H1 (cell line): ENCODE measurements at regions of chr2 and their contacts with region 1.

Region 1: GRCh38 chr2:231662028-231662810 is 46.1 kb upstream of the PTMA start:
- DNase-seq: peak; percentile 97 to 98
- H3K4me3 ChIP-seq: peak overlapping the region; percentile 14 to 54 (median 24); a peak in 6 of 8 replicates
- H3K27ac ChIP-seq: peak overlapping the region; percentile 95
- H3K4me1 ChIP-seq: peaks cover 0 to 26% (median 10%) of the 10 kb centered on the region in 4 experiments; a peak in 6 of 7 replicates
- H3K27me3 ChIP-seq: peaks cover 0 to 10% (median 3%) of the 10 kb centered on the region in 4 experiments; a peak in 5 of 7 replicates
- CTCF ChIP-seq: 0 out of 4 replicates have a peak, but pooled peaks of 1 of the 3 experiments have one; percentile 5
- EP300 ChIP-seq: peak; percentile 42 to 63; a peak in 1 of 3 replicates
- POLR2A ChIP-seq: peak in 1 of 2 experiments; percentile 79; a peak in 2 of 3 replicates
- RAD21 ChIP-seq: peak in 1 of 2 experiments; percentile 15; a peak in 1 of 4 replicates

Region 2: DNA sequence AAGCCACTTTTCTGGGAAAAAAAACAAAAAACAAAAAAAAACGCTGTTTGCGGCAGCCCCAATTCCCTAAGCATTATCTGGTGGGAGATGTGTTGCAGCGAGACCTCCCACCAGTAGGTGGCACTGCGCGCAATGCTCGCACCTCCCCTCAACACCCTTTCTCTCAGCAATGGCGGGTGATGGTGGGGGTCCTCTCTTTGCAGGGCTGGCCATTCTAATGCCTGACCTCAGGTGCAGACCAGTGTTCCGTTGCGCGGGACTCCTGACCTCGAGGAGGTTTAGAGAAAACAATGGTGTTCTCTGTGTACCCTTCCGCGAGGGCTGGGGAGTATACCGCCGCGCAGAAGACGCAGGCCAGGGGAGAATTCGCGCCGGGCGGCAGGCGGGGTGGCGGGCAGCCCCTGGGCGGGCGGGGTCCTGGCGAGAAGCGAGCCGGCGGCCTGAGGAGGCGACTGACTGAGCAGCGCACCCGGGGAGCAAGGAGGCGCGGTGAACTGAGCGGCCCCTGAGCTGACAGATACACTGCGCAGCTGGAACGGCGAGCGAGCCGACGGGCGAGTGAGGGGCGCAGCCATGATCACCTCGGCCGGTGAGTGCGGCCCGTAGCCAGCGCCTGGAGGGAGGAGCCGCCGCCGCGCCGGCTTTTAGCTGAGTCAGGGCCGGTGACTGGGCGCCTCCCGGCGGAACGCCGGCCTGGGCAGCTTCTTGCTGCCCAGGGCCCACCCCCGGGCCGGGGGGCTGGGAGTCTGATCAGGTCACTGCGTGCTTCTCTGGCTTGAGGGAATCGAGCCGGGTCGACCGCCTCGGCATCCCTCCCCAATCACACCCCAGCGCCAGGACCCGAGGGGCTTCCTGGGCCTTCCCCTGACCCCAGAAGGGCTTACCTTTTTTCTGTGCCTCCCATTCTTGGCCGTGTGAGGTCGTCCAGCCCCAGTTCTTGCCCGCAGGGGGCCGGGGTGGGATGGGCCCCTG is 605.5 kb before region 1 on chr2 and contains the start of gene PSMD1:
- CTCF ChIA-PET with region 1: no interaction called
- POLR2A ChIA-PET with region 1: no interaction called
- DNase-seq: peak; percentile 81 to 98
- H3K4me3 ChIP-seq: peak within 1 kb of the TSS; percentile 81 to 99 (median 96)
- H3K27ac ChIP-seq: peak within 1 kb of the TSS; percentile 99
- H3K4me1 ChIP-seq: peaks cover 3 to 12% (median 5%) of the 10 kb centered on the region in 4 experiments
- H3K27me3 ChIP-seq: peaks cover 0 to 23% (median 16%) of the 10 kb centered on the region in 4 experiments; a peak in 6 of 7 replicates
- CTCF ChIP-seq: peak; percentile 78 to 99 (median 97)
- EP300 ChIP-seq: no peak
- POLR2A ChIP-seq: peak in 1 of 2 experiments; percentile 80; a peak in 2 of 3 replicates
- RAD21 ChIP-seq: peak in 1 of 2 experiments; percentile 29; a peak in 1 of 4 replicates
- total RNA-seq, gene PSMD1: 170 and 179 TPM in 2 replicates

Region 3: DNA sequence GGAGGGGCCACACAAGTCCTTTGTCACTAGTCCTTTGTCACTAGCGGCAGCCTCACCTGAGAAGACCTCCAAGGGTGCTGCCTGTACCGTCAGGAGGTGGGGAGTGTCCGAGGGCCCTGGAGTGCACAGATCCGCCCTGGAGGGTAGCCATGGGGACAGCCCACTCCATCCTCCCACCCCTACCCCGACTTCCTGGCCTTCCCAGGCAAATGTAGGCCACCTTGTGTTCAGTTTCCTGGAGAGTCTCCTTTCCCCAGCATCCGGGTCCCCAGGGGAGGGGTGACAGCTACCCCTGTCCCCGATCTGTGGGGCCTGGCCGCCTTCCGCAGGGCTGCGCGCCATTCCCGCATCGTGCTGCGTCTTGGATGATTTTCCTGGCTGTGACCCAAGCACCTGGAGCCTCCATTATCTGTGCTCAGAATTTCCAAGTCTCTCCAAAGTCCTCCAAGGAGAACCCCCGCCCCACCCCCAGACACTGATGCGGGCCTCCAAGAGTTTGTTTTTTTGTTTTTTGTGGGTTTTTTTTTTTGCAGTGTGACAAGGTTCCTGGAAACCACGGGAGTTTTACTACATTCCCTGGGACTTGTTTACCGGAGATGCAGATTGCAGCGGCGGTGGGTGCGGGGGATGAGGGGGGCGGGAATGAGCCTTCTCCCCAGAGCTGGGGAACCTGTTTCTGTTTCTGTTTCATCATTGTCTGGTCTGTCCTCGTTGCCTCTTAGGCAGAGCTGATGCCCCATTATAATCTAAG is 40.9 kb before region 1 on chr2:
- CTCF ChIA-PET with region 1: interaction called, 5 read pairs
- POLR2A ChIA-PET with region 1: interaction called, 12 read pairs
- DNase-seq: peak in 1 of 2 experiments; percentile 77
- H3K4me3 ChIP-seq: peak overlapping the region in 1 of 4 experiments; percentile 30; a peak in 1 of 8 replicates
- H3K27ac ChIP-seq: peak overlapping the region; percentile 87
- H3K4me1 ChIP-seq: peaks cover 9 to 14% (median 12%) of the 10 kb centered on the region in 4 experiments
- H3K27me3 ChIP-seq: no peaks in the 10 kb centered on the region
- CTCF ChIP-seq: no peak
- EP300 ChIP-seq: no peak
- POLR2A ChIP-seq: no peak
- RAD21 ChIP-seq: no peak

Region 4: GRCh38 chr2:231648587-231649174 is 13.5 kb before region 1 on chr2:
- CTCF ChIA-PET with region 1: interaction called, 10 read pairs
- POLR2A ChIA-PET with region 1: interaction called, 14 read pairs
- DNase-seq: peak in 1 of 2 experiments; percentile 88
- H3K4me3 ChIP-seq: no peak overlapping the region
- H3K27ac ChIP-seq: no peak overlapping the region
- H3K4me1 ChIP-seq: peaks cover 2 to 7% (median 3%) of the 10 kb centered on the region in 4 experiments; a peak in 4 of 7 replicates
- H3K27me3 ChIP-seq: no peaks in the 10 kb centered on the region
- CTCF ChIP-seq: peak; percentile 88 to 95 (median 90)
- EP300 ChIP-seq: no peak
- POLR2A ChIP-seq: no peak
- RAD21 ChIP-seq: peak; percentile 87 to 92

Region 5: DNA sequence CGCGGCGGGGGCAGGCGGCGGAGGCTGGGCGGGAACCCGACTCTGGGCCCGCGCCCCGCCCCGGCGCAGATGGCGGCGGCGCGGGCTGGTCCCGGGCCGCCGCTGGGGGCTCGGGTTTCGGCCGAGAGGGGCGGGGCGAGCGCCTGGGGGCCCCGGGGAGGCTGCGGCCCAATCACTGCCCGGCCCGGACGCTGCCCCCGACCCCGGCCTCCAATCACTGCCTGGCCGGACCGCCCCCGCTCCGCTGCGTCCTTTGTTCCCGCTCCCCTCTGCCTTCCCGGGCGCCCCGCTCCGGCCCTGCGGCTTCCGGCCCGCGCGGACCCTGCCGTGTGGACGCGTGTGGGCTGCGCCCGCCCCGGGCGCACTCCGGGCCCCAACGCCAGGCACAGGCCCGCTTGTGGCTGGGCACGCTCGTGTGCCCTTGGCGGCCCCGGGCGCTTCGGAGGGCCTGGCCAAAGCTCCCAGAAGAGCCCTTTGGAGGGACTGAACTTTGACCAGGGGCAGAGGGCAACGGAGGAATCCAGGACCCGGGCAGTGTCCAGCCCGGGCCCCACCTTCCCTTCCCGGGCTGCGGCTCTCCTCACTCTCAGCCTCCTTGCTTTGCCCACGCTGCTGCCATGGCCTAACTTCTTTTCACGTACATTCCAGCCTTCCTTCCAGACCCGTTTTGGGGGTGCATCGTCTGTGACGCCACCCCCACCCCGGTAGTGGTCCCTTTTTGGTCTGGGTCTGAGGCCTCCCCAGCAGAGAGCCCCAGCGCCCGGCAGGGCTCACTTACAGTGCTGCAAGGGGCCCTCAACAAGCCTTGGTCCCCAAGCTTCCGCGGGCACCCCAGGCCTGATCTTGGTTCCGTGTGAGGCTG is 19.0 kb after region 1 on chr2:
- CTCF ChIA-PET with region 1: interaction called, 148 read pairs
- POLR2A ChIA-PET with region 1: interaction called, 100 read pairs
- DNase-seq: peak in 1 of 2 experiments; percentile 91
- H3K4me3 ChIP-seq: peak overlapping the region; percentile 66 to 88 (median 70)
- H3K27ac ChIP-seq: peak overlapping the region; percentile 99
- H3K4me1 ChIP-seq: peaks cover 0 to 40% (median 24%) of the 10 kb centered on the region in 4 experiments; a peak in 6 of 7 replicates
- H3K27me3 ChIP-seq: no peaks in the 10 kb centered on the region
- CTCF ChIP-seq: no peak
- EP300 ChIP-seq: no peak
- POLR2A ChIP-seq: peak in 1 of 2 experiments; percentile 80; a peak in 2 of 3 replicates
- RAD21 ChIP-seq: no peak; a peak in 1 of 4 replicates